AG04449 (cell line): ENCODE measurements at regions of chr4 and their contacts with region 1.

Region 1: GRCh38 chr4:185183619-185184281 is 20.1 kb downstream of the CFAP97 start:
- DNase-seq: no peak
- H3K4me3 ChIP-seq: no peak overlapping the region
- CTCF ChIP-seq: peak; percentile 75

Region 2: DNA sequence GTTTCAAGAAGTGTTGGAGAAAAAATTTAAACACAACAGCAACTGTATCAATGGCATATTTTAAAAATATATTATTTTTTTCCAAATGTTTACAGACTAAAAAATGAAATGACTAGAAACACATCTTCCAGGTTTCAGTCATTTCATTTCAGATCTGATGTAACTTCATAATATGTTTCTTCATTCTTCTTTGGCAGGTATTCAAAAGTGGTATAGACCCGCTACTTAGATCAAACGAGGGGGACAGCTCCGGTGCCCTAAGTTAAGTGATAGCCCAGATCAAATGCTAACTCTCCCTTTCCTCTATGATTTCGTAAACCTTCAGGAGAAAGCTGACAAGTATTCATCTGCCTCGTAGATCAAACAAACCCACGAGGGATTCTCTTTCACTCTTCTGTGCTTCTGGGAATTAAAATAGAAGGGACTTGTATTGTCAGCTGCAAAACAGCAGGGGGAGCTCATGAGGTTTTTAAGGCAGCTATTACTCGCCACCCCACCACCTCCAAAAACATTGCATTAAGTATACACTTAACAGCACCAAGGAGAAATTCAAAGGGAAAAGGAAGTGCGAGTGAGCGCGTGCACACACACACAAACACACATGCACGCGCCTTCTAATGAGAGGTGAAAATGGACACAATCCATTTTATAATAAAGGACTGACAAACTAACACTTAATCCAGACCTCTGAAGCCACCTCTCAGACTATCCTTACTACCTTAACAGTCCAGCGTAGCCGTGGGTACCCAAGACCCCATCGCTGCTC is 144.1 kb before region 1 on chr4:
- CTCF ChIA-PET with region 1: interaction called, 39 read pairs
- POLR2A ChIA-PET with region 1: no interaction called
- DNase-seq: peak; percentile 5
- H3K4me3 ChIP-seq: peak overlapping the region; percentile 36
- CTCF ChIP-seq: peak; percentile 58

Region 3: DNA sequence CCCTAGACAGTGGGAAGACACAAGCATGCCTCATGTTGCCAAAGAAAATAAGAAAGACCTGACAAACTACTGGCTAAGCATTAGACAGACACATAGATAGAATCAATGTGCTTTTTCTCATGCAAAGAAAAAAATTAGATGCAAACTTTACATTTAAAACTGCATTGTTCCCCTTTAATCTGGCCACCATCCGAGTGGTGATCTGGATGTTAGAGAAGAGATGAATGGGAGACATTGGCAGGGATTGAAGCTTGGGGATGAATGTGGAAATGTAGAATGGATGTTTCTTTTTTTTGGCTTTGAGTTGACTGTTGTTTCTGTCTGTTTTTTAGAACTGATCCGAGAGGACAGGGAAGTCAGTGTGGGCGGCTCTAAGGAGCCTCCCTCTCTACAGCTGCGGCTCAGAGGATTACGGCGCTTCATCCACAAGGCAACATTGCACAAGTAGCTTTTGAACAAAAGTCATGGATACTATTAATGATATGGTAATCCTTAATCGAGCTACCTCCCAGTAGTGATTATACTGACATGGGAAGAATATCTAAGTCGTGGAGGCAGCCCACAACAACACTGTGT is 112.4 kb before region 1 on chr4:
- CTCF ChIA-PET with region 1: no interaction called
- POLR2A ChIA-PET with region 1: no interaction called
- DNase-seq: no peak
- H3K4me3 ChIP-seq: no peak overlapping the region
- CTCF ChIP-seq: no peak

Region 4: DNA sequence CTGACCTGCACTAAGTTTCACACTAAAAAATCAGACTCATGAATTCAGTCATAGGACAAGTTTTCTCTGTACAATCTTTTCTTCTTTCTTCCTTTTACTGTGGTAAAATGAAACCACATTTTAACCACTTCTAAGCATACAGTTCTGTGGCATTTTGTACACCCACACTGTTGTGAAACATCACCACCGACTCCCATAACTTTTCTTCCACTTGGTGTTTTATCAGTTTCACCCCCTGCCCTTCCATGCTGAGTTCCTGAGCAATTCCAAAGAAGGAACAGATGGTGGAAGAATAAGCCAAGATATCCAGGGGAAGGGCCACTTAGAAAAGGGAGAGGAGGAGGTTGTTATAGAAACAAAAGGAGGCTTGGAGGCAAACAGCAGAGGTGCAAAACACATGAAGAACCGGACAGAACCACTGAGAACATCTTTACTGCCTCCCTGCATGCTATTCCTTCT is 18.1 kb before region 1 on chr4:
- CTCF ChIA-PET with region 1: interaction called, 14 read pairs
- POLR2A ChIA-PET with region 1: no interaction called
- DNase-seq: peak; percentile 47
- H3K4me3 ChIP-seq: no peak overlapping the region
- CTCF ChIP-seq: no peak

Region 5: DNA sequence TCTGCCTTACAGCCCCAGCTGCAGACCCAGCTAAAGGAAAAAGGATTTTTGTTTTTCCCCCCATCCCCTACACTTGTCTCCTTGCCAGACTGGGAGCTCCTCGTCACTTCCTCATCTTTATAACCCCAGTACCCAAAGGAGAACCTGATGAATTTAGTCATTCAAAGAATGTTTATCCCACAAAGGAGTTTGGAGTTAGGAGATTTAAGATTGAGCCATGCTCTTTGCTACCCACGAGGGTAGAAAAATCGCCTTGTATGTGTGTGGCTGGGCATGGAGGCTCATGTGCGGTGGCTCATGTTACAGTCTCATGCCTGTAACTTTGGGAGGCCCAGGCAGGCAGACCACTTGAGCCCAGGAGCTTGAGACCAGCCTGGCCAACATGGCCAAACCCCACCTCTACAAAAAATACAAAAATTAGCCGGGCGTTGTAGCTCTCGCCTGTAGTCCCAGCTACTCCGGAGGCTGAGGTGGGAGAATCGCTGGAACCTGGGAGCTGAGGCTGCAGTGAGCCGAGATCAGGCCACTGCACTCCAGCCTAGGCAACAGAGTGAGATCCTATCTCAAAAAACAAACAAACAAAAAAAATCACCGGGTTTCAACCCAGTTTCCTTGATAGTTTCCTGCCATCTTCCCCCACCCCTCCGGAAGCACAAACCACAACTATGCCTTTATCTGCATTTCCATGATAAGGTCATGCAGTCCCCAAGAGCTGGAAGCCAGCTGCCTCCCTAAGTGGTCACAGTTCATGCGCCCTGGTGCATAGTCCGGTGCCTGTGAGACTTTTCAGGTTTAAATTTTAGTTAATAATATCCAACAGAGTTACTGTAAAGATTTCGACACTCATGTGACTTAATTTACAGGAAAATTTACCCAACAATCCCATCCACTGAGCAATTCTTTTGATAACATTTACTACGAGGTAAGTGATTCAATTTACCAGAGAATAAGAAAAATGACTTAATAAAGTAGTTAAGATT is 18.5 kb after region 1 on chr4:
- CTCF ChIA-PET with region 1: interaction called, 121 read pairs
- POLR2A ChIA-PET with region 1: interaction called, 4 read pairs
- DNase-seq: no peak
- H3K4me3 ChIP-seq: no peak overlapping the region; the same call in 1 of the 2 replicates
- CTCF ChIP-seq: no peak

Region 6: DNA sequence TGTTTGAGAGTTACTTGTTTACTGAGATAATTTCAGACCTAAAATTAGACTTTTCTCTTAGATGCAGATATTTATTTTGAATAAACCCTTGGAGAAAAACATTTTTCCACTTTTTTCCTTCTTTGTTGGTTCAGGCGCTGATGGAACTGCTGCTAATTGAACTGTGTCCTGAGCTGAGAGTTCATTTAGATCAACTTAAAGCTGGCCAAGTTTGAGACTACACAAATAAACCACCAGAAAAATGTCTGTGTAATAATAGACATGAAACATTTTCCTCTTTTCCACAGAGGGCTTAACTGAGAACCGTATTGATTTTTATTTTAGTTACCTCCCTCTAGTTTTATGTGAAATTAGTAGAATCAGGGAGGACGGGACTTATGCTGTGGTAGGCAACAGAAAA is 179.5 kb after region 1 on chr4:
- CTCF ChIA-PET with region 1: no interaction called
- POLR2A ChIA-PET with region 1: no interaction called
- DNase-seq: no peak
- H3K4me3 ChIP-seq: no peak overlapping the region
- CTCF ChIP-seq: no peak

Region 7: GRCh38 chr4:185559913-185560281 is 376.1 kb after region 1 on chr4:
- CTCF ChIA-PET with region 1: no interaction called
- POLR2A ChIA-PET with region 1: no interaction called
- DNase-seq: no peak
- H3K4me3 ChIP-seq: no peak overlapping the region
- CTCF ChIP-seq: no peak

Region 8: DNA sequence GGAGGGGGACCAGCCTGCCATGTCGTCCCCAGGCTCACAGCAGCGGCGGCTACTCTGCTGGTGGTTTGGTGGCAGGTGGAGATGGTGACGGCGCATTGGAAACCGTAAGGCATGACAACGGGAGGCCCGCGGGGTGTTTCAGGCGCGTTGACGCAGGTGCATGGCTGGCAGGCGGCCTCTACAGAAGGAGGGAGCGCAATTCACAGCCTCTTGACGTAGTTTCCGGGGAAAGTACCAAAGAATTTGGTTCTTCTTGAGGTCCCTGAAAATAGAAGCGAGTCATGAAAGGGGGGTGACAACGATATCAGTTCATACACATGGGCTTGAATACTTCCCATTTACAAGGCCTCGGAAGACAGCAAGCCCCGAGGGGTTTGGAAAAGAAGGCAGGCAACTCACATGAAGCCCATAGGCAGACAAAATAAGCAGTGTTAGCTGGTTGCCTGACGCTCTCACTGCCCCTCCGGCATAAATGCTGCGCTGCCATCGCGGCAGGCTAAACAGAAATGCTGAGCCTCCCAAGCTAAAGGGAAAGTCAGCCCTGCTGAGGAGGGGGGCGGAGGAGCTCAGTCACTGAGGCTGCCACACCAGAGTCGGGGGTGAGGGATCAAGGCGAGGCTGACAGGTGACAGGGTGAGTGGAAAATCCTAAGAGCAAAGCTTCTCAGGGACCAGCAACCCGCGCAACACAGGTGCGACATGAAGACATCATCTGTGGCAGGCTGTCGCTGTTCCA is 403.8 kb after region 1 on chr4:
- CTCF ChIA-PET with region 1: no interaction called
- POLR2A ChIA-PET with region 1: no interaction called
- DNase-seq: no peak
- H3K4me3 ChIP-seq: no peak overlapping the region
- CTCF ChIP-seq: no peak